Common myeloid progenitor, CD34-positive (primary cell): ENCODE measurements at regions of chr18 and their contacts with region 1.

Region 1: DNA sequence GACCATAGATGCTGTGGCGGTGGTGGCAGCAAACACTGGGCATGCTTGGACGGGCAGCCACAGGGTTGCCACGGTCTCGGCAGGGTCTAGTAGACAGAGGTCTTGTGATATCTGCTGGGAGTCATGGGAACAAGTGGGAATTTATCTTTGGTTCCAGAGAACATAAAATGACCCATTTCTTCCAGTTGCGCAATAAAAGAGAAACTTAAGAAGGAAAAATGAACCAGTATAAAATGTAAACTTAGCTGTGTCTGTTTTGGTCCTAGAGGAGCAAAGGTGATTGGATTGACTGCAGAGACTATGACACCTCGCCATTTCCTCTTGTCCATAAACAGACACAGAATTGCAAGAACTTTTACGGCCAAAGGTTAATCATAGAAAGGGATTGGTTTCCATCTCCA is 132.6 kb upstream of the RBBP8 start:
- DNase-seq: no peak
- H3K4me3 ChIP-seq: no peak overlapping the region
- H3K27ac ChIP-seq: no peak overlapping the region
- H3K4me1 ChIP-seq: no peaks in the 10 kb centered on the region
- H3K27me3 ChIP-seq: no peaks in the 10 kb centered on the region

Region 2: DNA sequence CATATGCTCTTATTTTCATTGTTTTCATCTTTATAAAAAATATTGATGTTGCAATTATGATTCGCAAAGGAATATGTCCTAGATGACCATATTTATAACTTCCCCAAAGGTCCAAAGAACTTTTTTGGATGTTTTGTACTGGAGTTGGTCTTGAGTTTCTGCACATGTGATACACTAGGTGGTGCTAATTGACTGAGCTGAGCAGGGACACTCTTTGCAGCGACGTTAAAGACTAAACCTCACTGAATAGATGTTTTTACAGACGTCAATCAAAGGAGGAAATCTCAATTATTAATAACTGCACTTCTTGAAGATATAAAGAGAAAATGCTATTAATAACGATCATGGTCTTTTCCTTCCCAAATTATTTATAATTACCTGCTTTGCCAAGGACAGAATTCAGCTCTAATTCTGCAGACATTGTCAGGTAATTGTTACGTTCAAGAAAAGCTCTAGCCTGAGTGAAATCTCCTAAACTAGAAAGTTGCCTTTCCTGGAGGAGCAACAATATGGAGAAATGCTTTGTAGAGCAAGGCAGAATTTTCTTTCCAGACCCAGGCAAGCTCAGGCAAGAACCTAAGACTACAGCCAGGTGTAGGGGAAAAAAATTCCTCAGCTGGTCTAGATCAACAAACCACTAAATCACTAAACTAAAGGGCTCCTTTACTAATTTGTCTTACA is 13.2 kb after region 1 on chr18:
- CTCF ChIA-PET with region 1: interaction called, 12 read pairs
- POLR2A ChIA-PET with region 1: no interaction called
- DNase-seq: peak; percentile 21 to 58 (median 51)
- H3K4me3 ChIP-seq: no peak overlapping the region
- H3K27ac ChIP-seq: no peak overlapping the region
- H3K4me1 ChIP-seq: no peaks in the 10 kb centered on the region
- H3K27me3 ChIP-seq: peaks cover 0 to 2% (median 0%) of the 10 kb centered on the region in 5 experiments

Region 3: GRCh38 chr18:22977847-22978701 is 177.5 kb after region 1 on chr18:
- CTCF ChIA-PET with region 1: interaction called, 37 read pairs
- POLR2A ChIA-PET with region 1: no interaction called
- DNase-seq: peak; percentile 20 to 64 (median 59)
- H3K4me3 ChIP-seq: no peak overlapping the region
- H3K27ac ChIP-seq: peak overlapping the region in 1 of 2 experiments; percentile 3
- H3K4me1 ChIP-seq: peaks cover 0 to 11% (median 3%) of the 10 kb centered on the region in 4 experiments
- H3K27me3 ChIP-seq: no peaks in the 10 kb centered on the region

Region 4: DNA sequence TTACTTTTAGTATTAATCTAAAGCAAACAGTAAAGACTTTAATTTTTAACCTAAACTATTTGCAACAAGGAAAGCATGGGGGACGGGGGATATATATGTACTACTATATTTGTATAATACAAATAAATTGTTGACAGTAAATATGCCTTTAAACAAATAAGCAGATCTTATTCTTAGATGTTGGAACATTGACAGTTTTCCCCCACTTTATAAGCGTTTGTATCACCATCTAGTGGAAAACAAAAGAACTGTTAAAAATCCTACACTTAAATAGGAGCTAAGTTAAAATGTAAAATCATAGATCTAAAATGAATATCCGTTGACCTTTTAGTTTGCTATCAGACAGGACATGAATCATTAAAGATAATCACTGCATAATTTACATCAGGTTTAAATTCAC is 182.6 kb after region 1 on chr18:
- CTCF ChIA-PET with region 1: interaction called, 37 read pairs
- POLR2A ChIA-PET with region 1: no interaction called
- DNase-seq: peak; percentile 42 to 68 (median 64)
- H3K4me3 ChIP-seq: no peak overlapping the region
- H3K27ac ChIP-seq: no peak overlapping the region
- H3K4me1 ChIP-seq: peaks cover 0 to 2% (median under 1%) of the 10 kb centered on the region in 4 experiments
- H3K27me3 ChIP-seq: no peaks in the 10 kb centered on the region

Region 5: GRCh38 chr18:23012249-23012648 is 211.7 kb after region 1 on chr18:
- CTCF ChIA-PET with region 1: no interaction called
- POLR2A ChIA-PET with region 1: interaction called, 11 read pairs
- DNase-seq: no peak
- H3K4me3 ChIP-seq: no peak overlapping the region
- H3K27ac ChIP-seq: no peak overlapping the region
- H3K4me1 ChIP-seq: no peaks in the 10 kb centered on the region
- H3K27me3 ChIP-seq: no peaks in the 10 kb centered on the region